Mammary epithelial cell (primary cell): ENCODE measurements at regions of chr1 and their contacts with region 1.

Region 1: DNA sequence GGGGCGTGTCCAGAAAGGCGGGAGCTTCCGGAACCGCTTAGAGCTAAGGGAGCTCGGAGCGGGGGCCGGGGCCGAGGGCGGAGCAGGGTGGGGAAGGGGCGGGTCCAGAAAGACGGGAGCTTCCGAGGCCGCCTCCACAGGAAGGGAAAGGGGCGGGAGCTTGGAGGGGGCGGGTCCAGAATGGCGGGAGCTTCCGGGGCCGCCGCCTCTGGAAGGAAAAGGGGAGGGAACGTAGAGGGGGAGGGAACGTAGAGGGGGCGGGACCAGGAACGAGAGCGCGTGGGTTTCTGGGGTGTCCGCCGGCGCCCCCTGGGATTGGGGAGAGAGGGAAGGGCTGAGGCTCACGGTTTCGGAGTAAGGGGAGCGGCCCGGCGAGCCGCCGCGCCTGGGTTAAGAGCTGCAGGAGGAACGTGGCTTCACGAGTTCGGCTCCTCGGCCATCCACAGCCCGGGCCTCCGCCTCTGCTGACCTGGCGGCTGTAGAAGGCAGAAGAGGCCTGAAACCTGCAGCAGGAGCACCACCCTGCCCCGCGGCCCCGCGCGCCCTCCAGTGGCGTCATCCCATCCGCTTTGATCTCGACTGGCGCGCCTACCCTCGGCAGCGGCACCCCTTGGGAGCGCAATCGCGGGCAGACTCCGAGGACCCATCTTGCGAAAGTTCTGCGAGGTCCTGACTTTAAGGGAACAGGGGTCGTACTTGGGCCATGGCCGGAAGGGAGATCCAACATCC is 22.9 kb upstream of the HPDL start:
- DNase-seq: peak; percentile 97
- H3K4me3 ChIP-seq: peak overlapping the region; percentile 65 to 94 (median 84)
- H3K27ac ChIP-seq: peak overlapping the region; percentile 92
- H3K4me1 ChIP-seq: peaks cover 7% of the 10 kb centered on the region
- H3K27me3 ChIP-seq: no peaks in the 10 kb centered on the region
- CTCF ChIP-seq: peak; percentile 17 to 65

Region 2: GRCh38 chr1:44730741-44731512 is 572.8 kb before region 1 on chr1 and contains the start of gene RNU5D-1:
- CTCF ChIA-PET with region 1: no interaction called
- dilution Hi-C with region 1: no loop called
- in situ Hi-C with region 1: no loop called
- intact Hi-C with region 1: loop called (anchors 1 kb)
- DNase-seq: peak; percentile 99
- H3K4me3 ChIP-seq: peak within 1 kb of the TSS in 1 of 3 experiments; percentile 16
- H3K27ac ChIP-seq: peak within 1 kb of the TSS; percentile 100
- H3K4me1 ChIP-seq: peaks cover 13% of the 10 kb centered on the region
- H3K27me3 ChIP-seq: no peaks in the 10 kb centered on the region
- CTCF ChIP-seq: peak; percentile 77 to 86
- total RNA-seq, gene RNU5D-1: not detected

Region 3: GRCh38 chr1:44792783-44793714 is 510.7 kb before region 1 on chr1:
- CTCF ChIA-PET with region 1: no interaction called
- dilution Hi-C with region 1: no loop called
- in situ Hi-C with region 1: no loop called
- intact Hi-C with region 1: loop called (anchors 2 kb)
- DNase-seq: no peak
- H3K4me3 ChIP-seq: no peak overlapping the region
- H3K27ac ChIP-seq: peak overlapping the region; percentile 66
- H3K4me1 ChIP-seq: peaks cover 8% of the 10 kb centered on the region
- H3K27me3 ChIP-seq: no peaks in the 10 kb centered on the region
- CTCF ChIP-seq: no peak

Region 4: GRCh38 chr1:44848456-44849181 is 455.1 kb before region 1 on chr1:
- CTCF ChIA-PET with region 1: interaction called, 19 read pairs
- dilution Hi-C with region 1: no loop called
- in situ Hi-C with region 1: loop called in 1 of 2 experiments (anchors 25 kb)
- intact Hi-C with region 1: no loop called
- DNase-seq: no peak
- H3K4me3 ChIP-seq: no peak overlapping the region
- H3K27ac ChIP-seq: no peak overlapping the region
- H3K4me1 ChIP-seq: peaks cover 5% of the 10 kb centered on the region
- H3K27me3 ChIP-seq: no peaks in the 10 kb centered on the region
- CTCF ChIP-seq: no peak

Region 5: GRCh38 chr1:45018599-45019230 is 285.0 kb before region 1 on chr1:
- CTCF ChIA-PET with region 1: interaction called, 24 read pairs
- dilution Hi-C with region 1: no loop called
- in situ Hi-C with region 1: loop called (anchors 5 kb)
- intact Hi-C with region 1: loop called (anchors 1 kb)
- DNase-seq: peak; percentile 70
- H3K4me3 ChIP-seq: no peak overlapping the region
- H3K27ac ChIP-seq: no peak overlapping the region
- H3K4me1 ChIP-seq: peaks cover 3% of the 10 kb centered on the region
- H3K27me3 ChIP-seq: no peaks in the 10 kb centered on the region
- CTCF ChIP-seq: peak; percentile 90 to 94

Region 6: GRCh38 chr1:45258059-45258650 is 45.6 kb before region 1 on chr1:
- CTCF ChIA-PET with region 1: no interaction called
- dilution Hi-C with region 1: no loop called
- in situ Hi-C with region 1: no loop called
- intact Hi-C with region 1: no loop called
- DNase-seq: no peak
- H3K4me3 ChIP-seq: no peak overlapping the region
- H3K27ac ChIP-seq: no peak overlapping the region
- H3K4me1 ChIP-seq: no peaks in the 10 kb centered on the region
- H3K27me3 ChIP-seq: no peaks in the 10 kb centered on the region
- CTCF ChIP-seq: no peak

Region 7: GRCh38 chr1:45272983-45273382 is 30.8 kb before region 1 on chr1:
- CTCF ChIA-PET with region 1: no interaction called
- dilution Hi-C with region 1: no loop called
- in situ Hi-C with region 1: no loop called
- intact Hi-C with region 1: no loop called
- DNase-seq: peak; percentile 87
- H3K4me3 ChIP-seq: no peak overlapping the region
- H3K27ac ChIP-seq: peak overlapping the region; percentile 30
- H3K4me1 ChIP-seq: no peaks in the 10 kb centered on the region
- H3K27me3 ChIP-seq: no peaks in the 10 kb centered on the region
- CTCF ChIP-seq: no peak

Region 8: GRCh38 chr1:45490626-45491486 is 187.1 kb after region 1 on chr1 and contains the start of gene TESK2:
- CTCF ChIA-PET with region 1: no interaction called
- dilution Hi-C with region 1: no loop called
- in situ Hi-C with region 1: no loop called
- intact Hi-C with region 1: loop called (anchors 1 kb)
- DNase-seq: peak; percentile 100
- H3K4me3 ChIP-seq: peak within 1 kb of the TSS; percentile 72 to 92 (median 83)
- H3K27ac ChIP-seq: peak within 1 kb of the TSS; percentile 49
- H3K4me1 ChIP-seq: peaks cover 7% of the 10 kb centered on the region
- H3K27me3 ChIP-seq: no peaks in the 10 kb centered on the region
- CTCF ChIP-seq: no peak
- total RNA-seq, gene TESK2: 3.8 to 4.5 TPM